ENCODE measurements at regions of chr5 and their contacts with region 1.

Region 1: DNA sequence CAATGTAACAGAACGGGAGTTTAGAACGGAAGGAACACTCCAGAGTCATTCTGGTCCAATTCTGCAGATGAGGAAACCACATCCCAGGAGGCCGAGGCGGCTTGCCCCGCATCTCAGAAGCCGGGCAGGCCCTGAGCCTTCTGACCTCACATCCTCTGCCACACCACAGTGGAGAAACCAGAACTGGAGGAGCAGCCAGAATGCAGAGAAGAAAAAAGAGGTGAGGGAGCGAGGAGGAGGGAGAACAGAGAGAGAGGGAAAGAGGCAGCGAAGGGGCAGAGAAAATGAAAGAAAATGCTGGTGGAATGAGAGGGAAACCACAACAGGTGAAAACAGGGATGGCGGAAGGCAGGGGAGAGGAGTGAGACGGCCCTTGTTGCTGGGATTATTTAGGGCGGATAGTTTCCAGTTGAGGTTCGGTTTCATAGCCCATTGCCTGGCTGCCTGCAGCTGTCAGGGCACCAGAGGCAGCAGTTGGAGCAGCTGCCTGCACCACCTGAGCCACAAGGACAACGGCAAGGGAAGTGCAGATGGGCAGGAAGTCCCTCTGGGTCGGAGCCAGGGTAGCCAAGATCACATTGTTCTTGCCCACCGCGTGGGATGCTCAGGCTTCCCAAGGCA is at the start of gene HMHB1:
- DNase-seq: no peak
- H3K4me3 ChIP-seq: no peak within 1 kb of the TSS
- H3K27ac ChIP-seq: no peak within 1 kb of the TSS
- H3K4me1 ChIP-seq: no peaks in the 10 kb centered on the region
- H3K27me3 ChIP-seq: no peaks in the 10 kb centered on the region
- CTCF ChIP-seq: no peak
- POLR2A ChIP-seq: no peak
- total RNA-seq, gene HMHB1: not detected

Region 2: DNA sequence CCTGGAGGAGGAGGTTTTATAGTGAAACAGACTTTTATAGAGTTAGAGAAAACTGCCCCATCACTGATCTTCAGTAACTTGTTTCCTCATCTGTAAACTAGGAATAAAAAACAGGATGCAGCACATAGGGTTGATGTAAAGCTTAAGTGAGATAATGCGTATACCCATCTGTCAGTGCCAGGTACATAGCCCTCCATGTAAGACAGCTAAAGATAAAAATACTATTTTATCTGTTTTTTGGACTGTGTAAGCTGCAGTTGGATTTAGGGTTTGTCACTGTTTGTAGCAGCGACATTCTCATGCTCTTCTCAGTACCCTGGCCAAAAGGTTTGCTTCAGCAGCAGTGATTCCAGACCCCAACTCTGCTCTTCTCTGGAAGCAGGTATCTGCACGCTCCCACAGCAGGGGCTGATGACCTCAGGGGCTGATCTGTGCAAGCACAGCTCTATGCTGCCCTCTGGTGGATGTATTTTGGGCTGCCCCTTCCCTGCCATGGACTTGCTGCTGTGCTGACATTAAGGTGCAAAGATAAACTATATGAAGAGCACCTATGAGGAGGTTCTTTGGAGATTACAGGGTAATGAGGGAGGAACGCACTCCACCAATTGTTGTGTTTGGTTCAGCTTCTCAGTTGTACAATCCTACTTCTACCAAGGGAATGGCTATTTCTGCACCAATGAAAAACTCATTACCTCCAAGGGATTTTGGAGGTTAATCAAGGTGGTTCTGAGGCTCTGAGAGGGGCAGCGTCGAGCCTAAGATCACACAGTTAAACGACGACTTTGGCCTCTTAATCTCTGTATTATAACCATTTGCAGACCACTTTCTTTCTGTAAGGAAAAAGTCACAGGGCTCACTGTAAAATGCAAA is 12.9 kb after region 1 on chr5:
- intact Hi-C with region 1: no loop called
- DNase-seq: peak; percentile 52 to 69
- H3K4me3 ChIP-seq: no peak overlapping the region
- H3K27ac ChIP-seq: no peak overlapping the region
- H3K4me1 ChIP-seq: no peaks in the 10 kb centered on the region
- H3K27me3 ChIP-seq: no peaks in the 10 kb centered on the region
- CTCF ChIP-seq: peak; percentile 88 to 92 (median 88)
- POLR2A ChIP-seq: no peak

Region 3: GRCh38 chr5:143837306-143837848 is 25.2 kb after region 1 on chr5:
- intact Hi-C with region 1: loop called (anchors 2 kb)
- DNase-seq: no peak
- H3K4me3 ChIP-seq: no peak overlapping the region
- H3K27ac ChIP-seq: no peak overlapping the region
- H3K4me1 ChIP-seq: no peaks in the 10 kb centered on the region
- H3K27me3 ChIP-seq: no peaks in the 10 kb centered on the region
- CTCF ChIP-seq: no peak
- POLR2A ChIP-seq: no peak

Region 4: DNA sequence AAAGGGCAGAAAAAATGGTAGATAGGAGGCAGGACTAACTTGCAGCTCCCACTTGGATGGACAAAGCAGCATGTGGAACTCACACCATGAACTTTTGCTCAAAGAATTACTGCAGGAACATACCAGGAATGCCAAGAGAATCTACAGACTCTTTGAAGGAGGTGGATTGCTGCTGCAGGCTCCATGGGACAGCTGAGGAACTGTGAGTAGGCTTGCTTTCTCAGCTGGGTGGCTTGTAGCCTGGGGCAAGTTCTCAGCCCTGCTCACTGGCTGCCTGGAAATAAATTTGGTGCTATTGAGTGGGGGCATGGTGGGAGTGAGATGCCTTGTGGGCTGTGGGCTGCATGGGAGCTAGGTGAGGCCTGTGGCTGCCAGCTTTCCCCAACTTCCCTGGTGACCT is 1448.5 kb after region 1 on chr5:
- intact Hi-C with region 1: no loop called
- DNase-seq: no peak
- H3K4me3 ChIP-seq: no peak overlapping the region
- H3K27ac ChIP-seq: no peak overlapping the region
- H3K4me1 ChIP-seq: no peaks in the 10 kb centered on the region
- H3K27me3 ChIP-seq: no peaks in the 10 kb centered on the region
- CTCF ChIP-seq: no peak
- POLR2A ChIP-seq: no peak

Measured in breast epithelium (tissue), 4 donors.